ENCODE measurements at regions of chr17 and their contacts with region 1.

Region 1: DNA sequence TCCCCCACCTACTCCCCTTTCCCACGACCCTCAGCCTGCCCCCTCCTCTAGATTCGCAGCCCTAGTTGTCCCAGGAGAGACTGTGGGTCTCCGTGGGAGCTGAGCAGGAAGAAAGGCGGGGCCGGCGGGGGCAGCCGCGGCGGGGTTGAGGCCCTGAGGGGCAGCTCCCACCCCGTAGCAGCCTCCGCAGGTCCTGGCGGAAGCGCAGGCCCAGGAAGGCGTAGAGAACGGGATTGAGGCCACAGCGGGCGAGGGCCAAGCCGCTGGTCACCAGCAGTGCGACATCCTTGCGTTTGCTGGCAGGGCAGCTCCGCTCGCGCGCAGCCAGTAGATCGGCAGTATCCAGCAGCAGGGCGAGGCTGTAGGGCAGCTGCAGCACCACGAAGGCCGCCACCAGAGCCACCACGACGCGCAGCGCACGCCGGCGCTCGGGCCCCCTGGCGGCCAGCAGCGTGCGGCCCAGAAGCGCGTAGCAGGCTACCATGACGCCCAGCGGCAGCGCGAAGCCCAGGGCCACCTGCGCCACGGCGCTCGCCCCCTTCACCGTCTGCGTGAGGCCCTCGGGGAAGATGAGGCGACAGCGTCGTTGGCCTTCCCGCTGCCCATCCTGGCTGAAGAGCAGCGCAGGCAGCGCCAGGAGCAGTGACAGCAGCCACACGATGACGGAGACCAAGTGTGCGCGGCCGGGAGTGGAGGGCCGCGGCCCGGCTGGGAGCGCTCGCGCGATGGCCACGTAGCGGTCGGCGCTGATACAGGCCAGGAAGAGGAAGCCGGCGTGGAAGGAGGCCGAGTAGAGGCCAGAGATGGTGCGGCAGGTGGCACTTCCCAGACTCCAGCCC is 1.9 kb downstream of the CCR10 start:
- DNase-seq: peak; percentile 86 to 95
- H3K4me3 ChIP-seq: peak overlapping the region; percentile 58 to 96 (median 90)
- H3K27ac ChIP-seq: peak overlapping the region; percentile 90 to 99 (median 96)
- H3K4me1 ChIP-seq: peaks cover 60 to 89% (median 86%) of the 10 kb centered on the region in 4 donors
- H3K27me3 ChIP-seq: peaks cover 0 to 45% (median 7%) of the 10 kb centered on the region in 3 donors
- CTCF ChIP-seq: peak in 6 of 7 experiments; percentile 3 to 95 (median 90)
- EP300 ChIP-seq: no peak
- POLR2A ChIP-seq: no peak

Region 2: GRCh38 chr17:42586514-42587230 is 93.0 kb before region 1 on chr17:
- intact Hi-C with region 1: loop called (anchors 10 kb)
- DNase-seq: no peak
- H3K4me3 ChIP-seq: no peak overlapping the region
- H3K27ac ChIP-seq: peak overlapping the region; percentile 54 to 75 (median 71)
- H3K4me1 ChIP-seq: peaks cover 31 to 51% (median 44%) of the 10 kb centered on the region in 4 donors
- H3K27me3 ChIP-seq: no peaks in the 10 kb centered on the region
- CTCF ChIP-seq: no peak
- EP300 ChIP-seq: no peak
- POLR2A ChIP-seq: no peak

Region 3: GRCh38 chr17:42629411-42630009 is 50.2 kb before region 1 on chr17:
- intact Hi-C with region 1: no loop called
- DNase-seq: no peak
- H3K4me3 ChIP-seq: no peak overlapping the region
- H3K27ac ChIP-seq: peak overlapping the region; percentile 15 to 80 (median 68)
- H3K4me1 ChIP-seq: peaks cover 6 to 26% (median 14%) of the 10 kb centered on the region in 4 donors
- H3K27me3 ChIP-seq: no peaks in the 10 kb centered on the region
- CTCF ChIP-seq: no peak
- EP300 ChIP-seq: no peak
- POLR2A ChIP-seq: no peak